CD8-positive, alpha-beta T cell (primary cell): ENCODE measurements at regions of chr16 and their contacts with region 1.

Region 1: DNA sequence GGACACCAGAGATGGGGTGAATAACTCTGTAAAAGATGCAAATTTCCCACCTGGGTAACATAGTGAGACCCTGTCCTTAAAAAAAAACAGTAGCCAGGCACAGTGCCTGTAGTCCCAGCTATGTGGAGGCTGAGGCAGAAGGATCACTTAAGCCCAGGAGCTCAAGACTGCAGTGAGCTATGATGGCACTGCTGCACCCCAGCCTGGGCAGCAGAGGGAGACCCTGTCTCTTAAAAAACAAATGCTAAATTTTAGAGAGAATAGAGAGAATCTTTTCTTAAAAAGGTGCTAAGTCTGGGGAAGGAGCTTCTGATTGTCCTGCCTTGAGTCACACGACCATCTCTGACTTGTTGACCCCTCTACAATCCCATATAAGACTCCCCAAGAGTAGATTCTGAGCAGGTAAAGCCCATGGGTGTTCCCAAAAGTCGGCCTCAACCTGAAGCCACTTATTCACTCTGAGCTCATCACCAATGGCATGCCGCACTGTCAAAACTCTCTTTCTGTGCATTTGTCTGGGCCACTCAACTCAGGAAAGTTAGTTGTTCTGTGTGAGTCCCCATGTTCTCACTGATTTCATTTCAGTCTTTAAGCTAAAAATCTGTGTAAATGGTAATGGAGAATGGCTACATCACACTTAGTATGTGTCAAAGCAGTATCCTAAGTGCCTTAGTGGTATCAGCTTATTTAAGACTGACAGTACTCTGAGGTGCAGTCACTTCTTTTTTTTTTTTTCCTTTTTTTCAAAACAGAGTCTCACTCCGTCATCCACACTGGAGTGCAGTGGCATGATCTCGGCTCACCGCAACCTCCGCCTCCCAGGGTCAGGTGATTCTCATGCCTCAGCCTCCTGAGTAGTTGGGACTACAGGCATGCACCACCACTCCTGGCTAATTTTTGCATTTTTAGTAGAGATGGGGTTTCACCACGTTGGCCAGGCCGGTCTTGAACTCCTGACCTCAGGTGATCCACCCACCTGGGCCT is 41.6 kb downstream of the PRKCB start:
- DNase-seq: peak in 3 of 9 experiments; percentile 27 to 48 (median 39)
- ATAC-seq: peak; percentile 65
- H3K4me3 ChIP-seq: no peak overlapping the region
- H3K4me3 Mint-ChIP-seq: no peak overlapping the region
- H3K27ac ChIP-seq: no peak overlapping the region
- H3K27ac Mint-ChIP-seq: peak overlapping the region; percentile 64
- H3K4me1 ChIP-seq: peaks cover 72% of the 10 kb centered on the region
- H3K4me1 Mint-ChIP-seq: peaks cover 81% of the 10 kb centered on the region
- H3K27me3 ChIP-seq: no peaks in the 10 kb centered on the region
- H3K27me3 Mint-ChIP-seq: no peaks in the 10 kb centered on the region
- CTCF ChIP-seq: peak; percentile 40

Region 2: GRCh38 chr16:23768586-23768985 is 108.8 kb before region 1 on chr16:
- CTCF ChIA-PET with region 1: no interaction called
- POLR2A ChIA-PET with region 1: no interaction called
- intact Hi-C with region 1: no loop called
- DNase-seq: peak in 1 of 9 experiments; percentile 1
- ATAC-seq: no peak
- H3K4me3 ChIP-seq: no peak overlapping the region
- H3K4me3 Mint-ChIP-seq: no peak overlapping the region
- H3K27ac ChIP-seq: no peak overlapping the region
- H3K27ac Mint-ChIP-seq: no peak overlapping the region
- H3K4me1 ChIP-seq: no peaks in the 10 kb centered on the region
- H3K4me1 Mint-ChIP-seq: no peaks in the 10 kb centered on the region
- H3K27me3 ChIP-seq: no peaks in the 10 kb centered on the region
- H3K27me3 Mint-ChIP-seq: peaks cover 3% of the 10 kb centered on the region
- CTCF ChIP-seq: no peak

Region 3: GRCh38 chr16:23852794-23853562 is 24.4 kb before region 1 on chr16:
- CTCF ChIA-PET with region 1: interaction called, 12 read pairs
- POLR2A ChIA-PET with region 1: no interaction called
- intact Hi-C with region 1: no loop called
- DNase-seq: no peak
- ATAC-seq: no peak
- H3K4me3 ChIP-seq: no peak overlapping the region
- H3K4me3 Mint-ChIP-seq: no peak overlapping the region
- H3K27ac ChIP-seq: no peak overlapping the region
- H3K27ac Mint-ChIP-seq: no peak overlapping the region
- H3K4me1 ChIP-seq: peaks cover 58% of the 10 kb centered on the region
- H3K4me1 Mint-ChIP-seq: peaks cover 90% of the 10 kb centered on the region
- H3K27me3 ChIP-seq: no peaks in the 10 kb centered on the region
- H3K27me3 Mint-ChIP-seq: no peaks in the 10 kb centered on the region
- CTCF ChIP-seq: no peak

Region 4: GRCh38 chr16:23889189-23889588 is 11.8 kb after region 1 on chr16:
- CTCF ChIA-PET with region 1: interaction called, 40 read pairs
- POLR2A ChIA-PET with region 1: interaction called, 3 read pairs
- intact Hi-C with region 1: no loop called
- DNase-seq: no peak
- ATAC-seq: no peak
- H3K4me3 ChIP-seq: no peak overlapping the region
- H3K4me3 Mint-ChIP-seq: no peak overlapping the region
- H3K27ac ChIP-seq: no peak overlapping the region
- H3K27ac Mint-ChIP-seq: no peak overlapping the region
- H3K4me1 ChIP-seq: peaks cover 9% of the 10 kb centered on the region
- H3K4me1 Mint-ChIP-seq: peaks cover 74% of the 10 kb centered on the region
- H3K27me3 ChIP-seq: no peaks in the 10 kb centered on the region
- H3K27me3 Mint-ChIP-seq: no peaks in the 10 kb centered on the region
- CTCF ChIP-seq: no peak

Region 5: GRCh38 chr16:23952128-23952970 is 75.0 kb after region 1 on chr16:
- CTCF ChIA-PET with region 1: interaction called, 15 read pairs
- POLR2A ChIA-PET with region 1: interaction called, 6 read pairs
- intact Hi-C with region 1: no loop called
- DNase-seq: peak in 6 of 9 experiments; percentile 14 to 62 (median 52)
- ATAC-seq: peak; percentile 46
- H3K4me3 ChIP-seq: no peak overlapping the region
- H3K4me3 Mint-ChIP-seq: peak overlapping the region; percentile 76
- H3K27ac ChIP-seq: peak overlapping the region; percentile 8 to 45
- H3K27ac Mint-ChIP-seq: peak overlapping the region; percentile 96
- H3K4me1 ChIP-seq: peaks cover 73% of the 10 kb centered on the region
- H3K4me1 Mint-ChIP-seq: peaks cover 91% of the 10 kb centered on the region
- H3K27me3 ChIP-seq: no peaks in the 10 kb centered on the region
- H3K27me3 Mint-ChIP-seq: no peaks in the 10 kb centered on the region
- CTCF ChIP-seq: no peak

Region 6: GRCh38 chr16:24015923-24016322 is 138.5 kb after region 1 on chr16:
- CTCF ChIA-PET with region 1: interaction called, 235 read pairs
- POLR2A ChIA-PET with region 1: interaction called, 3 read pairs
- intact Hi-C with region 1: no loop called
- DNase-seq: no peak
- ATAC-seq: no peak
- H3K4me3 ChIP-seq: no peak overlapping the region
- H3K4me3 Mint-ChIP-seq: no peak overlapping the region
- H3K27ac ChIP-seq: peak overlapping the region in 1 of 2 experiments; percentile 77
- H3K27ac Mint-ChIP-seq: peak overlapping the region; percentile 84
- H3K4me1 ChIP-seq: peaks cover 60% of the 10 kb centered on the region
- H3K4me1 Mint-ChIP-seq: peaks cover 59% of the 10 kb centered on the region
- H3K27me3 ChIP-seq: no peaks in the 10 kb centered on the region
- H3K27me3 Mint-ChIP-seq: no peaks in the 10 kb centered on the region
- CTCF ChIP-seq: no peak